Caco-2 (cell line): ENCODE measurements at regions of chr12 and their contacts with region 1.

Region 1: DNA sequence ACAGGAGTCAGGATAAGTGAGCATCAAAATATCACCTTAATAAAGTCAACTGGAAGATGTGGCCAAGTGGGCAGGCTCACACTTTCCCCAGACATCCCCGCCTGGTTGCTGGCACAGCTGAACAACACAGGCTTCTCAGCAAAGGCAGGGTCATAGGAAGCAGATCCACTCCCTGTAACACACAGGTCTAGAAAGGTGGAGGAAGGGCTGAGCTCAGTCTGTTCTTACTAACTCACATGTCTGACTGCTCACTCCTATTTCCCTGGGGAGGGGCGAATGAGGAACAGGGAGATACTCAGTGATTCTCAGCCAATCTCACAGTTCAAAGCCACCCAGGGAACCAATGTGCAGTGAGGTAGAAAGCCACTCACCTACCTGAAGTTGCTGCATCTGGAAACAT is 45.0 kb upstream of the AMN1 start:
- DNase-seq: peak; percentile 59 to 78
- H3K4me3 ChIP-seq: no peak overlapping the region
- H3K4me3 Mint-ChIP-seq: peak overlapping the region; percentile 16
- H3K27ac Mint-ChIP-seq: peak overlapping the region; percentile 89
- H3K4me1 ChIP-seq: peaks cover 32% of the 10 kb centered on the region
- H3K4me1 Mint-ChIP-seq: peaks cover 26% of the 10 kb centered on the region
- H3K27me3 ChIP-seq: no peaks in the 10 kb centered on the region
- H3K27me3 Mint-ChIP-seq: no peaks in the 10 kb centered on the region
- CTCF ChIP-seq: no peak

Region 2: GRCh38 chr12:31682136-31682962 is 91.5 kb before region 1 on chr12:
- CTCF ChIA-PET with region 1: no interaction called
- POLR2A ChIA-PET with region 1: no interaction called
- intact Hi-C with region 1: loop called (anchors 2 kb)
- DNase-seq: peak; percentile 85 to 86
- H3K4me3 ChIP-seq: no peak overlapping the region
- H3K4me3 Mint-ChIP-seq: no peak overlapping the region
- H3K27ac Mint-ChIP-seq: no peak overlapping the region
- H3K4me1 ChIP-seq: no peaks in the 10 kb centered on the region; the same call in 1 of the 2 replicates
- H3K4me1 Mint-ChIP-seq: peaks cover 14% of the 10 kb centered on the region
- H3K27me3 ChIP-seq: no peaks in the 10 kb centered on the region
- H3K27me3 Mint-ChIP-seq: no peaks in the 10 kb centered on the region
- CTCF ChIP-seq: peak; percentile 78 to 94

Region 3: GRCh38 chr12:31728917-31729640 is 44.8 kb before region 1 on chr12 and contains the start of gene AMN1:
- CTCF ChIA-PET with region 1: no interaction called
- POLR2A ChIA-PET with region 1: interaction called, 4 read pairs
- intact Hi-C with region 1: loop called (anchors 1 kb)
- DNase-seq: peak; percentile 100
- H3K4me3 ChIP-seq: peak within 1 kb of the TSS; percentile 78
- H3K4me3 Mint-ChIP-seq: peak within 1 kb of the TSS; percentile 95
- H3K27ac Mint-ChIP-seq: peak within 1 kb of the TSS; percentile 98
- H3K4me1 ChIP-seq: peaks cover 35% of the 10 kb centered on the region
- H3K4me1 Mint-ChIP-seq: peaks cover 21% of the 10 kb centered on the region
- H3K27me3 ChIP-seq: no peaks in the 10 kb centered on the region
- H3K27me3 Mint-ChIP-seq: no peaks in the 10 kb centered on the region
- CTCF ChIP-seq: no peak
- total RNA-seq, gene AMN1: 6.2 and 8.8 TPM in 2 replicates

Region 4: DNA sequence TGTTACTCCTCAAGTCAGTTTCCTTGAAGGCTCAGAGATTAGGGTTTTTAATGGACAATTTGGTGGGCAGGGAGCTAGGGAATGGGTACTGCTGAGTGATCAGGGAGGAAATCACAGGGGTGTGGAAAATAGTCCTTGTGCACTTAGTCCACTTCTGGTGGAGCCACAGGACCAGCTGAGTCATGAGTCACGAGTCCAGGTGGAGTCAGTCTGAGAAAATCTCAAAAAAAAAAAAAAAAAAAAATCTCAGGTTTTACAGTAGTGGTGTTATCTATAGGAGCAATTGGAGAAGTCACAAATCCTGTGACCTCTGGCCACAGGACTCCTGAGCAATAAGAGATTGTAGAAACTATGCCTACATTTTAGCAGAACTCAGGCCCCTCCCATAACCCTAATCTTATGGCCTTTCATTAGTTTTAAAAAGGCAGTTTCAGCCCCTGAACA is 16.9 kb before region 1 on chr12:
- CTCF ChIA-PET with region 1: no interaction called
- POLR2A ChIA-PET with region 1: no interaction called
- intact Hi-C with region 1: loop called (anchors 2 kb)
- DNase-seq: peak; percentile 42 to 78
- H3K4me3 ChIP-seq: no peak overlapping the region
- H3K4me3 Mint-ChIP-seq: no peak overlapping the region
- H3K27ac Mint-ChIP-seq: peak overlapping the region; percentile 43
- H3K4me1 ChIP-seq: peaks cover 12% of the 10 kb centered on the region
- H3K4me1 Mint-ChIP-seq: peaks cover 14% of the 10 kb centered on the region
- H3K27me3 ChIP-seq: no peaks in the 10 kb centered on the region
- H3K27me3 Mint-ChIP-seq: no peaks in the 10 kb centered on the region
- CTCF ChIP-seq: no peak

Region 5: DNA sequence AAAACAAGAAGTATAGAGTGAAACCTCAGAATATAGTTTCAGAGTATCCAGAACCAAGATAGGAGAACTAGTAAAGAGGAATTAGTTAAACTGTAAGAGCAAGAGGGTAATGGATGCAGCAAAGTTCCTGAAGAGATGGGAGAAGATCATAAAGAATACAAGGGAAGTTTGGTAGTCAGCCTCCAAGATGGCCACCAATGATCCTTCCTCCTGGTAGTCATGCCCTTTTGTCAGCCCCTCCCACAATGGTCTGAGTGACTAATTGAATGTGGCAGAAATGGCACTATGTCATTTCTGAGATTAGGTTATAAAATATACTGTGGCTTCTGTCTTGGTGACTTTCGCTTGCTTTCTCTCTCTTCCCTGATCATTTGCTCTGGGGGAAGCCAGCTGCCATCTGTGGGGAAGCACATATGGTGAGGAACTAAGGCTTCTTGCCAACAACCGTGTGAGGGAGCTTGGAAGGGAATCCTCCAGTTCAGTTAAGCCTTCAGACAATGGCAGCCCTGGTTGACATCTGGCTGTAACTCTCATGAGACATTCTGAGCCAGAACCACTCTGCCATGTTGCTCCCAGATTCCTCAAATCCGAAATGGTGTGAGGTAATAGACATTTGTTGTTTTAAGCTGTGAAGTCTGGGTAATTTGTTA is 10.3 kb after region 1 on chr12:
- CTCF ChIA-PET with region 1: no interaction called
- POLR2A ChIA-PET with region 1: no interaction called
- intact Hi-C with region 1: no loop called
- DNase-seq: no peak
- H3K4me3 ChIP-seq: no peak overlapping the region
- H3K4me3 Mint-ChIP-seq: no peak overlapping the region
- H3K27ac Mint-ChIP-seq: no peak overlapping the region
- H3K4me1 ChIP-seq: peaks cover 12% of the 10 kb centered on the region
- H3K4me1 Mint-ChIP-seq: peaks cover 3% of the 10 kb centered on the region
- H3K27me3 ChIP-seq: no peaks in the 10 kb centered on the region
- H3K27me3 Mint-ChIP-seq: no peaks in the 10 kb centered on the region
- CTCF ChIP-seq: no peak

Region 6: DNA sequence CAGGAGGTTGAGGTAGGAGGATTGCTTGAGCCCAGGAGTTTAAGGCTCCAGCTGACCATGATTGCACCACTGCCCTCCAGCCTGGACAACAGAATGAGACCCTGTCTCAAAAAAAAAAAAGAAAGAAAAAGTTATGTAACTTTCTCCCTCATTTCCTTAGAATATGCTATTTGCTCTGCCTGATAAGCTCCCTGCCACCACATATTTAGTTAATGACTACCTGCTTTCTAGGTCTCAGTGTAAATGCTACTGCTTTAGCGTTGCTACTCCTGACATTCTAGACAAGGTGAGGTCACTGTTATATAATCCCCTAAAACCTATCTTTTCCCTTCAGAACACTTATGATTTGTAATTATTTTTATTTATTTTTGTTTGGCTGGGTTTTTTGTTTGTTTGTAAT is 41.2 kb after region 1 on chr12:
- CTCF ChIA-PET with region 1: no interaction called
- POLR2A ChIA-PET with region 1: no interaction called
- intact Hi-C with region 1: loop called (anchors 1 kb)
- DNase-seq: peak; percentile 51 to 58
- H3K4me3 ChIP-seq: no peak overlapping the region
- H3K4me3 Mint-ChIP-seq: no peak overlapping the region
- H3K27ac Mint-ChIP-seq: peak overlapping the region; percentile 28
- H3K4me1 ChIP-seq: peaks cover 24% of the 10 kb centered on the region
- H3K4me1 Mint-ChIP-seq: peaks cover 9% of the 10 kb centered on the region
- H3K27me3 ChIP-seq: no peaks in the 10 kb centered on the region
- H3K27me3 Mint-ChIP-seq: no peaks in the 10 kb centered on the region
- CTCF ChIP-seq: no peak

Region 7: GRCh38 chr12:31959161-31959700 is 185.4 kb after region 1 on chr12 and contains the start of gene RESF1:
- CTCF ChIA-PET with region 1: no interaction called
- POLR2A ChIA-PET with region 1: interaction called, 6 read pairs
- intact Hi-C with region 1: loop called (anchors 1 kb)
- DNase-seq: peak; percentile 97 to 98
- H3K4me3 ChIP-seq: peak within 1 kb of the TSS; percentile 69
- H3K4me3 Mint-ChIP-seq: peak within 1 kb of the TSS; percentile 84
- H3K27ac Mint-ChIP-seq: peak within 1 kb of the TSS; percentile 93
- H3K4me1 ChIP-seq: peaks cover 38% of the 10 kb centered on the region
- H3K4me1 Mint-ChIP-seq: peaks cover 42% of the 10 kb centered on the region
- H3K27me3 ChIP-seq: no peaks in the 10 kb centered on the region
- H3K27me3 Mint-ChIP-seq: no peaks in the 10 kb centered on the region
- CTCF ChIP-seq: peak in 1 of 2 experiments; percentile 0
- total RNA-seq, gene RESF1: 110 and 118 TPM in 2 replicates